PC-9 (cell line): ENCODE measurements at regions of chr1 and their contacts with region 1.

Region 1: DNA sequence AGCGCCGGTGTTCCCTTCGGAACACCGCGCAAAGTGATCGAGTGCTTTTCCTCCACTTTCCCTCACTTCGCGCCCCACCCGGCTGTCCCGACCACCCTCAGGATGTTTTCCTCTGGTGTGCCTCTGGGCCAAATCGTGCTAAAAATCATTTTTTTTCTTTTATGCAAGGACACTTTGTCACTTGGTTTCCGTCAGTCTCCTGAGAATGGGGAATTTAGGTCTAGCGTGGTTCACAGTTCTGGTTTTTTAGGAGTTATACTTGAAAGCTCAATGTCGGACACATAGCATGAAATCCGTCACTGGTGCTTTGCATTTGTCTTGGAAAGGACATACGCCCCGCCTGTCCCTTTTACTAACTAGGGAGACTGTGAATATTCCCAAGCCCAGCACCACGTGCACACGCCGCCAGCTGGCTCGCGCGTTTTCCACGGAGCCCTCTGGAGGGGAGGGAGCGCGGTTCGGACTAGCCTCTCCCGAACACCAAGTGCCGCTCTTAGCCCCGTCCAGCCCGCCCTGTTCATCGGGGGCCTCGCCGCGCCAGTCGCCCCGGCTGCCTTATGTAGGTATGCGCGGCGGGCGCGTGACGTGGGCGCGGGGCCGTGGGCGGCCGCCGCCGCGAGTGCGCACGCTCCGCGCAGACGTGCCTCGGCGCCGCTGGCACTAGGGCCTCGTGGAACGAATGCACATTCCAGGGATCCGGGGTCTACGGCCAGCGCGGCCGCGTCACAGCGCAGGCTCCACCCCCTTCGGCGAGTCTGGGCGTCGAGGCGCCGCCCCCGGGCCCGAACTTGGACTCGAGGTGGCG is 572 bp upstream of the IRF2BP2 start:
- DNase-seq: peak; percentile 72 to 93
- H3K4me3 ChIP-seq: peak overlapping the region; percentile 91
- H3K27ac ChIP-seq: peak overlapping the region; percentile 100
- H3K4me1 ChIP-seq: peaks cover 38% of the 10 kb centered on the region
- H3K27me3 ChIP-seq: no peaks in the 10 kb centered on the region
- CTCF ChIP-seq: no peak

Region 2: GRCh38 chr1:234631721-234632125 is 21.2 kb after region 1 on chr1:
- CTCF ChIA-PET with region 1: no interaction called
- POLR2A ChIA-PET with region 1: interaction called, 34 read pairs
- intact Hi-C with region 1: loop called (anchors 1 kb)
- DNase-seq: peak; percentile 77 to 97
- H3K4me3 ChIP-seq: no peak overlapping the region
- H3K27ac ChIP-seq: peak overlapping the region; percentile 88
- H3K4me1 ChIP-seq: peaks cover 38% of the 10 kb centered on the region
- H3K27me3 ChIP-seq: no peaks in the 10 kb centered on the region
- CTCF ChIP-seq: no peak

Region 3: GRCh38 chr1:234772345-234773147 is 162.0 kb after region 1 on chr1:
- CTCF ChIA-PET with region 1: no interaction called
- POLR2A ChIA-PET with region 1: interaction called, 19 read pairs
- intact Hi-C with region 1: loop called (anchors 1 kb)
- DNase-seq: peak; percentile 95 to 99
- H3K4me3 ChIP-seq: peak overlapping the region; percentile 35; the same call in 1 of the 2 replicates
- H3K27ac ChIP-seq: peak overlapping the region; percentile 95
- H3K4me1 ChIP-seq: peaks cover 22% of the 10 kb centered on the region
- H3K27me3 ChIP-seq: no peaks in the 10 kb centered on the region
- CTCF ChIP-seq: no peak

Region 4: GRCh38 chr1:234899041-234899729 is 288.6 kb after region 1 on chr1:
- CTCF ChIA-PET with region 1: no interaction called
- POLR2A ChIA-PET with region 1: interaction called, 4 read pairs
- intact Hi-C with region 1: loop called (anchors 2 kb)
- DNase-seq: peak; percentile 82
- H3K4me3 ChIP-seq: no peak overlapping the region
- H3K27ac ChIP-seq: peak overlapping the region; percentile 59
- H3K4me1 ChIP-seq: peaks cover 67% of the 10 kb centered on the region
- H3K27me3 ChIP-seq: no peaks in the 10 kb centered on the region
- CTCF ChIP-seq: no peak

Region 5: DNA sequence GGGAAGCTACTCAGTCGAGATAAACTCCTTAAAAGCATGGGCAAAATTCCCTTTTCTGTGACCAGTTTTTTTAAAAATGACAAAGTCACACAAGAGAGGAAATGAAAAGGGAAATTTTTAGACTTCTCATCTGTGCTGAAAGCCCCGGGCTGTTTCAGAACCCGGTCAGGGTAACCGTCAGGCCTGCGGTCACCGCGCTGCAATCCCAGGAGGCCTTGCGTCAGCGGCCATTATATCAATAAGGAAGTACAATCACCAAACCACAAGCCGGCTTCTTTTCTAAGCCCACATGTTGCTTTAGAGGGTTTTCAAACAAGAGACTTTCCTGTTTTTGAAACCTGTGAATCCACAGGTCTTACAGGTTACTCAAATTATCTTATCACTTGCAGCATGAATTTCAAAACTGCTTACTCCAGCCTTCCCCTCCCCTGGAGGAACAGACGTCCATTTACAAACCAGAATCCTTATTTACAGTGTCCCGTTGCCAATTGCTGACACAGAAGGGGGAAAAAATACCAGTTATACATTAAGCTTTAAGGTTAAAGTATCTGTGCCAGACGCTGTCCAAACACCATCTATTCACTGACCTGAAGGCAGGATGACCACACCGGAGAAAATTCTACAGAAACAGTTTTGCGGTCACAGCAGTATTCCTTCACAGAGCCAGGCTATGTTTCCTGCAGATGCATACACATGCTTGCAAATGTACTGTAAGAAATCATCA is 352.8 kb after region 1 on chr1:
- CTCF ChIA-PET with region 1: interaction called, 3 read pairs
- POLR2A ChIA-PET with region 1: interaction called, 4 read pairs
- intact Hi-C with region 1: loop called (anchors 1 kb)
- DNase-seq: peak; percentile 90 to 99
- H3K4me3 ChIP-seq: peak overlapping the region; percentile 38
- H3K27ac ChIP-seq: peak overlapping the region; percentile 99
- H3K4me1 ChIP-seq: peaks cover 84% of the 10 kb centered on the region
- H3K27me3 ChIP-seq: no peaks in the 10 kb centered on the region
- CTCF ChIP-seq: no peak

Region 6: GRCh38 chr1:235067263-235068172 is 457.0 kb after region 1 on chr1:
- CTCF ChIA-PET with region 1: no interaction called
- POLR2A ChIA-PET with region 1: interaction called, 9 read pairs
- intact Hi-C with region 1: loop called (anchors 1 kb)
- DNase-seq: peak; percentile 98 to 100
- H3K4me3 ChIP-seq: peak overlapping the region; percentile 39; the same call in 1 of the 2 replicates
- H3K27ac ChIP-seq: peak overlapping the region; percentile 100
- H3K4me1 ChIP-seq: peaks cover 68% of the 10 kb centered on the region
- H3K27me3 ChIP-seq: no peaks in the 10 kb centered on the region
- CTCF ChIP-seq: no peak